ENCODE measurements at regions of chr14 and their contacts with region 1.

Region 1: DNA sequence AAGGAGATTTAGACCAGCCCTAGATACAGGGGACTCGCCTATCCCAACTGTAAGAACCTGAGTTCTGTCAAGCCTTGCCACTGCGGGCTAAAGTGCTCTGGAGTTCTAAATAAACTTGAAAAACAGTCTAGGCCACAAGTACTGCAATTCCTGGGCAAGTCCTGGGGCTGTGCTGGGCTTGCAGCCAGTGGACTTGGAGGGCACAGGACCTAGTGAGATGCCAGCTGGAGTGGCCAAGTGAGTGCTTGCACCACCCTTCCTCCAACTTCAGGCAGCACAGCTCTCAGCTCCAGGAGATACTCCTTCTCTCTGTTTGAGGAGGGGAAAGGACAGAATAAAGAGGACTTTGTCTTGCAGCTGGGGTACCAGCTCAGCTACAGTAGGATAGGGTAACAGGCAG is 307.6 kb upstream of the FBXO33 start:
- DNase-seq: peak in 4 of 5 donors; percentile 10 to 75 (median 46)
- ATAC-seq: peak; percentile 67 to 91 (median 74)
- H3K4me3 ChIP-seq: no peak overlapping the region
- H3K27ac ChIP-seq: no peak overlapping the region
- H3K4me1 ChIP-seq: no peaks in the 10 kb centered on the region
- H3K27me3 ChIP-seq: no peaks in the 10 kb centered on the region
- CTCF ChIP-seq: no peak
- POLR2A ChIP-seq: no peak

Region 2: DNA sequence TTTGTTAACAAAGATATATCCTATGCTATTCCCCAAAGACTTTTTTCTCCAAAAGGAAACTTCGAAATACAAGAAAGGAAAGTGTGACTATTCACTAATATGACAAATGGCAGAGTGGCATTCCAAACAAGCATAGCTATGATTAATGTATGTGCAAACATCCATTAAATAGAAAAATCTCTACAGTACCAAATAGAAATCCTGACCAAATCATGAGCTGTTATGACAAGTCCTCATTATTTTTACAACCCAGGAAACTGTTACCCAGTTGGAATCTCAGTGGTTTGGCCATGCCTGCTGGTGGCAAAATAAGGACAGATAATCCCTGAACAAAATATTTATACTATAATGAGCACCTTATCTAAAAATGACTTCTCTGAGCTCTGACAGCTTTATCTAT is 838.9 kb before region 1 on chr14:
- intact Hi-C with region 1: no loop called
- DNase-seq: no peak
- ATAC-seq: no peak
- H3K4me3 ChIP-seq: no peak overlapping the region
- H3K27ac ChIP-seq: no peak overlapping the region
- H3K4me1 ChIP-seq: no peaks in the 10 kb centered on the region
- H3K27me3 ChIP-seq: no peaks in the 10 kb centered on the region
- CTCF ChIP-seq: no peak
- POLR2A ChIP-seq: no peak

Region 3: GRCh38 chr14:39897657-39898056 is 157.9 kb after region 1 on chr14:
- intact Hi-C with region 1: no loop called
- DNase-seq: no peak
- ATAC-seq: no peak
- H3K4me3 ChIP-seq: no peak overlapping the region
- H3K27ac ChIP-seq: no peak overlapping the region
- H3K4me1 ChIP-seq: no peaks in the 10 kb centered on the region
- H3K27me3 ChIP-seq: no peaks in the 10 kb centered on the region
- CTCF ChIP-seq: no peak
- POLR2A ChIP-seq: no peak

Region 4: GRCh38 chr14:39974036-39974435 is 234.2 kb after region 1 on chr14:
- intact Hi-C with region 1: no loop called
- DNase-seq: no peak
- ATAC-seq: no peak
- H3K4me3 ChIP-seq: no peak overlapping the region
- H3K27ac ChIP-seq: no peak overlapping the region
- H3K4me1 ChIP-seq: no peaks in the 10 kb centered on the region
- H3K27me3 ChIP-seq: no peaks in the 10 kb centered on the region
- CTCF ChIP-seq: no peak
- POLR2A ChIP-seq: no peak

Region 5: GRCh38 chr14:40119321-40119720 is 379.5 kb after region 1 on chr14:
- intact Hi-C with region 1: loop called in 1 of 10 experiments (anchors 10 kb)
- DNase-seq: no peak
- ATAC-seq: no peak
- H3K4me3 ChIP-seq: no peak overlapping the region
- H3K27ac ChIP-seq: no peak overlapping the region
- H3K4me1 ChIP-seq: no peaks in the 10 kb centered on the region
- H3K27me3 ChIP-seq: no peaks in the 10 kb centered on the region
- CTCF ChIP-seq: no peak
- POLR2A ChIP-seq: no peak

Measured in heart left ventricle (tissue), 16 donors.